Mammary epithelial cell (primary cell): ENCODE measurements at regions of chr11 and their contacts with region 1.

Region 1: DNA sequence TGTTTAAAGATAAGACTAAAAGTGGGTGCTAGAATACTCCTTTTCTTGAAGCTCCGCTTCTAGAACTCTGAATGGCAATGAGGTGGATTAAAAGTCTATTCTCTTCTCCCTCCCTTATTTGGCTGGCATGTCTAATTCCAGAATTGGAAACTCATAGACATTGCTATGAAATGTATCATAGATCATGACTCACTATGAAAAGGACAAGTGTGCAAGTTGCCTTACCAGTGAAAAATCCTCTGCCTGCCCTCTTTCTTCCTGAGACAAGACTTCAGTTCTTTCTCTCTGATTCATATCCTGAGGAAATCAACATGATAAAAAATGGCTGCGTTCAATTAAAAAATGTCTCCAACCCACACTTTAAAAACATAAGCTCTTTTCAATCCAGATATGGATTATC is 73.2 kb upstream of the BLID start:
- DNase-seq: peak; percentile 92
- H3K4me3 ChIP-seq: no peak overlapping the region
- H3K27ac ChIP-seq: peak overlapping the region; percentile 82
- H3K4me1 ChIP-seq: peaks cover 61% of the 10 kb centered on the region
- H3K27me3 ChIP-seq: no peaks in the 10 kb centered on the region
- CTCF ChIP-seq: no peak

Region 2: DNA sequence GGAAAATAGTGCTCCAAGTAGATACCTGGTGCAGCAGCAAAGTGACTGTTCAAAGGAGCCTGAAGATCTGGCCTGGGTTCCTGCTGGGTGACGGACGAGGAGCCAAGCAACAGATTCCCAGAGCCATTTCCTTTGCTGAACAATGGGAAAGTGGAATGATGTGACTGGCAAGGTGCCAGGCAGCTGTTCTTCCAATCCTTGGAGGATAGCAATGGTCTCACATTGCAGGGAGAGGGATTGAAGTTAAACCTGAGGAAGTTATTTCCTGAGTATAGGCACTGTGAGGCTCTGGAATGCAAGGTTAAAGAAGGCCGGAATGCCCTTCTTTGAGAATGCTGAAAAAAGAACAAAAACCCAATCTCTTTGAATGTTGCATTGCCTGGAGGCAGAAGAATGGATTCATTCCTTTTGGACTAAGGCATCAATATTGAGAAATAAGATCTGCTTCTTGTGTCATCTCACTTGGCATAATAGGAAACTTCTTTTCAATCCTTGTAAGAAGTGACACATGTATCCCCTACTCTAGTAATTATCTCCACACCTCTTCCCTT is 297.0 kb before region 1 on chr11:
- CTCF ChIA-PET with region 1: no interaction called
- dilution Hi-C with region 1: no loop called
- in situ Hi-C with region 1: no loop called
- intact Hi-C with region 1: loop called (anchors 5 kb)
- DNase-seq: peak; percentile 51
- H3K4me3 ChIP-seq: no peak overlapping the region
- H3K27ac ChIP-seq: no peak overlapping the region
- H3K4me1 ChIP-seq: peaks cover 73% of the 10 kb centered on the region
- H3K27me3 ChIP-seq: peaks cover 4% of the 10 kb centered on the region
- CTCF ChIP-seq: no peak

Region 3: GRCh38 chr11:122045181-122045586 is 144.0 kb before region 1 on chr11:
- CTCF ChIA-PET with region 1: no interaction called
- dilution Hi-C with region 1: no loop called
- in situ Hi-C with region 1: no loop called
- intact Hi-C with region 1: loop called (anchors 5 kb)
- DNase-seq: peak; percentile 93
- H3K4me3 ChIP-seq: no peak overlapping the region
- H3K27ac ChIP-seq: peak overlapping the region; percentile 67
- H3K4me1 ChIP-seq: peaks cover 27% of the 10 kb centered on the region
- H3K27me3 ChIP-seq: no peaks in the 10 kb centered on the region
- CTCF ChIP-seq: no peak

Region 4: GRCh38 chr11:122095681-122096262 is 93.5 kb before region 1 on chr11:
- CTCF ChIA-PET with region 1: no interaction called
- dilution Hi-C with region 1: loop called (anchors 5 kb)
- in situ Hi-C with region 1: loop called in 1 of 2 experiments (anchors 10 kb)
- intact Hi-C with region 1: no loop called
- DNase-seq: peak; percentile 42
- H3K4me3 ChIP-seq: peak overlapping the region; percentile 21 to 83 (median 72)
- H3K27ac ChIP-seq: peak overlapping the region; percentile 88
- H3K4me1 ChIP-seq: peaks cover 21% of the 10 kb centered on the region
- H3K27me3 ChIP-seq: no peaks in the 10 kb centered on the region
- CTCF ChIP-seq: no peak

Region 5: GRCh38 chr11:122137081-122137793 is 52.0 kb before region 1 on chr11:
- CTCF ChIA-PET with region 1: no interaction called
- dilution Hi-C with region 1: loop called (anchors 10 kb)
- in situ Hi-C with region 1: no loop called
- intact Hi-C with region 1: loop called (anchors 2 kb)
- DNase-seq: peak; percentile 65
- H3K4me3 ChIP-seq: no peak overlapping the region
- H3K27ac ChIP-seq: peak overlapping the region; percentile 68
- H3K4me1 ChIP-seq: peaks cover 59% of the 10 kb centered on the region
- H3K27me3 ChIP-seq: no peaks in the 10 kb centered on the region
- CTCF ChIP-seq: no peak

Region 6: GRCh38 chr11:122159173-122159721 is 30.0 kb before region 1 on chr11:
- CTCF ChIA-PET with region 1: no interaction called
- dilution Hi-C with region 1: no loop called
- in situ Hi-C with region 1: no loop called
- intact Hi-C with region 1: no loop called
- DNase-seq: peak; percentile 52
- H3K4me3 ChIP-seq: peak overlapping the region; percentile 25 to 65 (median 37)
- H3K27ac ChIP-seq: peak overlapping the region; percentile 95
- H3K4me1 ChIP-seq: peaks cover 69% of the 10 kb centered on the region
- H3K27me3 ChIP-seq: no peaks in the 10 kb centered on the region
- CTCF ChIP-seq: no peak

Region 7: GRCh38 chr11:122170815-122171475 is 18.3 kb before region 1 on chr11:
- CTCF ChIA-PET with region 1: no interaction called
- dilution Hi-C with region 1: no loop called
- in situ Hi-C with region 1: no loop called
- intact Hi-C with region 1: loop called (anchors 2 kb)
- DNase-seq: peak; percentile 91
- H3K4me3 ChIP-seq: no peak overlapping the region
- H3K27ac ChIP-seq: peak overlapping the region; percentile 95
- H3K4me1 ChIP-seq: peaks cover 73% of the 10 kb centered on the region
- H3K27me3 ChIP-seq: no peaks in the 10 kb centered on the region
- CTCF ChIP-seq: no peak

Region 8: GRCh38 chr11:122405547-122406341 is 216.5 kb after region 1 on chr11:
- CTCF ChIA-PET with region 1: no interaction called
- dilution Hi-C with region 1: no loop called
- in situ Hi-C with region 1: no loop called
- intact Hi-C with region 1: no loop called
- DNase-seq: no peak
- H3K4me3 ChIP-seq: no peak overlapping the region
- H3K27ac ChIP-seq: no peak overlapping the region
- H3K4me1 ChIP-seq: no peaks in the 10 kb centered on the region
- H3K27me3 ChIP-seq: peaks cover 7% of the 10 kb centered on the region
- CTCF ChIP-seq: no peak

Region 9: GRCh38 chr11:122668562-122669090 is 479.4 kb after region 1 on chr11:
- CTCF ChIA-PET with region 1: no interaction called
- dilution Hi-C with region 1: no loop called
- in situ Hi-C with region 1: no loop called
- intact Hi-C with region 1: no loop called
- DNase-seq: peak; percentile 64
- H3K4me3 ChIP-seq: no peak overlapping the region
- H3K27ac ChIP-seq: no peak overlapping the region
- H3K4me1 ChIP-seq: peaks cover 22% of the 10 kb centered on the region
- H3K27me3 ChIP-seq: no peaks in the 10 kb centered on the region
- CTCF ChIP-seq: no peak

Region 10: GRCh38 chr11:123765601-123766000 is 1576.4 kb after region 1 on chr11:
- CTCF ChIA-PET with region 1: no interaction called
- dilution Hi-C with region 1: no loop called
- in situ Hi-C with region 1: no loop called
- intact Hi-C with region 1: no loop called
- DNase-seq: no peak
- H3K4me3 ChIP-seq: no peak overlapping the region
- H3K27ac ChIP-seq: no peak overlapping the region
- H3K4me1 ChIP-seq: no peaks in the 10 kb centered on the region
- H3K27me3 ChIP-seq: no peaks in the 10 kb centered on the region
- CTCF ChIP-seq: no peak